Activated B cell treated with CpG ODN at 0.5 μM for 24 hours (primary cell): ENCODE measurements at regions of chr11 and their contacts with region 1.

Region 1: DNA sequence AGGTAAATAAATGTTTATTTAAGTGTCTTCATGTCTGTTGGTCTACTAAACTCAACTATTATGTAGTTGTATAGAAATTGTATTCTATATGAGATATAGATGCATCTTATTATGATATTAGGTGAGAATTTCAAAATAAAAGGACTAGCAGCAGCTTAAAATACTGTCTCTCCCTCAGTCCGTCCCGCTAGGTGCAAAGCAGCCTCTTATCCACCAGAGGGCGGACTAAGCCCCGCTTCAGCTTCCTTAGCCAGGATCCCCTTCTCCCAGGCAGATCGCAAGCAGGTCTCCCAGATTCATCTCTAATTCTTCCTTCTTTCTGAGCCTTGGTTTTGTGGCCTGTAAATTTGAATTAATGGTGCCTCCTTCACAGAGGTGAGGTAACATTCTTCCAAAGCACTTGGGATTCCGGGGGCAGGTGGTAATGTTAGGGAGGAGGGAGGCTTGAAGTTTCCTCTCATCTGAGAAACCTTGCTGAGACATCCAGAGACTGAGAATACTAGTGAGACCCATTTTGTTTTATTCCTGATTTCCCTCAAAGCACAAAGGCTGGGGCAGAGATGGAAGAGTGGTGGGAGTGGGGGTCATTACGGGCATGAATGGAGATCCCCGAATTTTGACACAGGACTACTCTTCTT is 13.5 kb upstream of the INSC start:
- DNase-seq: no peak
- ATAC-seq: peak; percentile 84
- H3K4me3 Mint-ChIP-seq: no peak overlapping the region
- H3K27ac Mint-ChIP-seq: no peak overlapping the region
- H3K4me1 Mint-ChIP-seq: peaks cover 6% of the 10 kb centered on the region
- H3K27me3 Mint-ChIP-seq: peaks cover 20% of the 10 kb centered on the region
- CTCF ChIP-seq: peak; percentile 84

Region 2: GRCh38 chr11:14789879-14790484 is 311.2 kb before region 1 on chr11:
- CTCF ChIA-PET with region 1: interaction called, 8 read pairs
- POLR2A ChIA-PET with region 1: no interaction called
- intact Hi-C with region 1: loop called (anchors 10 kb)
- DNase-seq: no peak
- ATAC-seq: no peak
- H3K4me3 Mint-ChIP-seq: no peak overlapping the region
- H3K27ac Mint-ChIP-seq: no peak overlapping the region
- H3K4me1 Mint-ChIP-seq: no peaks in the 10 kb centered on the region
- H3K27me3 Mint-ChIP-seq: no peaks in the 10 kb centered on the region
- CTCF ChIP-seq: peak; percentile 33

Region 3: DNA sequence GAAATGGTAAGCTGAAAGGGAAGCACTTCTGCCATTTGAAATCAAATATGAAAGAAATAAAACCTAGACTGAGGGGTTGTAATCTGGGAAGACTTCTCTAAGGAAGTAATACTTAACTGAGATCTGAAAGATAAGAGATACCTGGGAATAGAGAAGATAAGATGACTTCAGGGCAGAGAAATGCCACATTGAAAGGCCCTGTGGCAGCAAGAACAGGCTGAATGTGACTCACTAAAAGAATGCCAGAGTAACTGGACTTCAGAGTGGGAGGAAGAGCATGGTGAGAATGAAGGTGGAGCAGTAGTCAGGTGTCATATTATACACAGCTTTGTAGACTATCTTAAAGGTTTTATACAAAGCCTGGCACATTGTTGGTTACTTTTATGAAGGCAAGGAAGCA is 146.6 kb before region 1 on chr11:
- CTCF ChIA-PET with region 1: no interaction called
- POLR2A ChIA-PET with region 1: no interaction called
- intact Hi-C with region 1: no loop called
- DNase-seq: no peak
- ATAC-seq: no peak
- H3K4me3 Mint-ChIP-seq: no peak overlapping the region
- H3K27ac Mint-ChIP-seq: no peak overlapping the region
- H3K4me1 Mint-ChIP-seq: no peaks in the 10 kb centered on the region
- H3K27me3 Mint-ChIP-seq: peaks cover 3% of the 10 kb centered on the region
- CTCF ChIP-seq: no peak

Region 4: DNA sequence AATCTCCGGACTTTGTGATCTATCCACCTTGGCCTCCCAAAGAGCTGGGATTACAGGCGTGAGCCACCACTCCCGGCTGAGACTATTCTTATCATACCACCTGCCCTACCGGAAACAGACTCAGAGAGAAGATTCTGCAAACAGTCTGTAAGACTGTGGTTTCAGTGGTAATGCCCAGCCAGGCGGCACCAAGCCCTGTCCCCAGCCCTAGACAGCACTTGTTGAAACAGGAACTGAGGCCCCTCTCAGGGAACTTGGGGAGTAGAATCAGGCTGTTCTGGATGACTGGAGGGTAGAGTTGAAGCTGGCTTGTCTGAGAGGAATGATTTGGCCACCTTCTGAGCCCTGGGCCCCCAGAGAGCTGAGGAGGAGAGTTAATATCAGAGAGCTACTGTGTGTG is 12.2 kb after region 1 on chr11:
- CTCF ChIA-PET with region 1: interaction called, 50 read pairs
- POLR2A ChIA-PET with region 1: no interaction called
- intact Hi-C with region 1: no loop called
- DNase-seq: peak; percentile 54
- ATAC-seq: peak; percentile 94
- H3K4me3 Mint-ChIP-seq: peak overlapping the region; percentile 70
- H3K27ac Mint-ChIP-seq: peak overlapping the region; percentile 79
- H3K4me1 Mint-ChIP-seq: peaks cover 77% of the 10 kb centered on the region
- H3K27me3 Mint-ChIP-seq: peaks cover 13% of the 10 kb centered on the region
- CTCF ChIP-seq: no peak

Region 5: DNA sequence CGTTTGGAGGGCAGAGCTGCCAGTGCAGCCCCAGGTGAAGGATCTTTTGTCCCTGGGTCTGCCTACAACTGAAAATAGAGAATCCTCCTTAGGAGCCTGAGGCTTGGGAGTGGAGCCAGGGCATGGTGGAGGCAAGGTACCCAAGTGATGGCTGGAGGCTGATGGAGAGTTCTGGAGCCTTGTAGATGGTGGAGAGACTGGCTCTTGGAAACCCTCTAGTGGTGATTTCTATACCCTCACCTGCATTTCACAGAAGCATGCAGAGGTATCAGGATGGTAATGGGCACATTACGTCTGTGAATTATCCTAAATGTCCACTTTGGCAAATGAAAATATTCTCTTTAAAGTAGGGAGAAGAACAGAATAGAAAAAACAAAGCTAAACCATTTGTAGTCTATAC is 57.9 kb after region 1 on chr11:
- CTCF ChIA-PET with region 1: interaction called, 67 read pairs
- POLR2A ChIA-PET with region 1: no interaction called
- intact Hi-C with region 1: loop called (anchors 1 kb)
- DNase-seq: no peak
- ATAC-seq: no peak
- H3K4me3 Mint-ChIP-seq: no peak overlapping the region
- H3K27ac Mint-ChIP-seq: no peak overlapping the region
- H3K4me1 Mint-ChIP-seq: no peaks in the 10 kb centered on the region
- H3K27me3 Mint-ChIP-seq: no peaks in the 10 kb centered on the region
- CTCF ChIP-seq: no peak

Region 6: GRCh38 chr11:15216678-15217077 is 115.5 kb after region 1 on chr11:
- CTCF ChIA-PET with region 1: interaction called, 126 read pairs
- POLR2A ChIA-PET with region 1: no interaction called
- intact Hi-C with region 1: no loop called
- DNase-seq: no peak
- ATAC-seq: no peak
- H3K4me3 Mint-ChIP-seq: no peak overlapping the region
- H3K27ac Mint-ChIP-seq: no peak overlapping the region
- H3K4me1 Mint-ChIP-seq: no peaks in the 10 kb centered on the region
- H3K27me3 Mint-ChIP-seq: no peaks in the 10 kb centered on the region
- CTCF ChIP-seq: no peak

Region 7: DNA sequence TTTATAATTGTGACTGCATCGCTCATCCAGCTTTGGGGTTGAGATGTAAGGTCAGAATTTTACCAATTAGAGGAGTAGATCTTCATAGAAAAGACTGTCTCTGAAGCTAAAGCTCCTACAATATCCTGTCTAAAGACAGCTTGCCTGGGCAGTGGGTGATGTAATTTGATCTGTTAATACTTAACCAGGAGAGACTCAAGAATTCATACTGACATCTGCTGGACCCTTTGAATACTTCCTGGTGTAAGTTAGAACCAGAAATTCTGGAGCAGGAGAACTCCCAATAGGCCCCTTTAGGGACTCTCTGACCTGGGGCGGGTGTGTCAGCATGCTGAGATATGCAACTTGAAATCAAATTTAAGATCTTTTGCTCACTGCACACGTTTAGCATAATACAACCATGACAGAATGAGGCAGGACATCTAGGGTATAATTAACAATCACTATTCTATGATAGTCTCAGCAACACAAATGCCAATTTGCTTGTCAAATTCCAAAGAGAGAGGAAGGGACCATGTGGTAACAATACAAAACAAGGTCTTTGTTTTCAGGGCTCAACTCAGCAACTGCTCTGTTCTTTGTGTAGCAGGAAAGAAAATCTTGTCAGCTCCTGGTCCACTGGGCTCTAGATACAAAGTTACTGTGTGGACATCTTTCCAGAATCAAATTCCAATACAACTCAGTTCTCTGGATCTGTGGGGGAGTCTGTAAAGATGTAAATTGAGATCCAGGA is 157.4 kb after region 1 on chr11:
- CTCF ChIA-PET with region 1: no interaction called
- POLR2A ChIA-PET with region 1: no interaction called
- intact Hi-C with region 1: no loop called
- DNase-seq: no peak
- ATAC-seq: no peak
- H3K4me3 Mint-ChIP-seq: no peak overlapping the region
- H3K27ac Mint-ChIP-seq: no peak overlapping the region
- H3K4me1 Mint-ChIP-seq: no peaks in the 10 kb centered on the region
- H3K27me3 Mint-ChIP-seq: peaks cover 13% of the 10 kb centered on the region
- CTCF ChIP-seq: no peak

Region 8: DNA sequence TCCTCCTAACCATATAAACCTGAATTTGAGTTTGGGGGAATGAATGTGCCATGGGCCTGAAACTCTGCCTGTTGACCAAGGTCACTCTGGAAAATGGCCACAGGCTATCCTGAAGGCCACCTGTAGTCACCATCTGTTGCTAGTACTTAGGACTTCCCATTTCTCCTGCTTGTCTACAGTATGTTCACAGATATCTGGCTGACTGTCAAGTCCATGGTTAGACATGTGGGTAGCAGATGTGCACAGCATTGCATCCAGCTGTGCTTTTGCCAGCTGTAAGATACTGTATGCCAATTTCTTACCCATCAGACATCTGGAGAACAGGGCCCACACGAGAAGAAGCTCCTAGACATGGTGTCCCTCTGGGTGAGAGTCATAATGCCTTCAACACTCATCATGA is 488.9 kb after region 1 on chr11:
- CTCF ChIA-PET with region 1: no interaction called
- POLR2A ChIA-PET with region 1: no interaction called
- intact Hi-C with region 1: no loop called
- DNase-seq: no peak
- ATAC-seq: no peak
- H3K4me3 Mint-ChIP-seq: no peak overlapping the region
- H3K27ac Mint-ChIP-seq: no peak overlapping the region
- H3K4me1 Mint-ChIP-seq: no peaks in the 10 kb centered on the region
- H3K27me3 Mint-ChIP-seq: no peaks in the 10 kb centered on the region
- CTCF ChIP-seq: no peak